ENCODE measurements at regions of chr7 and their contacts with region 1.

Region 1: DNA sequence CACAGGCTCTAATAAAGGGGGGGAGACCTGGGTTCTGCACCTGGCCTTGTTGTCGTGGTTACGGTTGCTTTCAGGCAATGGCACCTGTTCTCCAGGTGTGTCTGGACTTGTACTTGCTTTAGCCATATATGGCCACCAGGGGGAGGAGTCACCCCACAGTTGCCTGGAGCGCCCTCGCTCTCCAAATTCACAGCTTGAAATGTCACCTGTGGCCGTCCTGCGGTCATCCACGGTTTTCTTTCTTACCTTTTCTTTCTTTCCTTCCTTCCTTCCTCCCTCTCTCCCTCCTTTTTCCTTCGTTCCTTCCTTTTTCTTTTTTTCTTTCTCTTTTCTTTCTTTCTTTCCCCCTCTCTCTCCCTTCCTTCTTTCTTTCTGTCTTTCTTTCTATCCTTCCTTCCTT is 157.2 kb upstream of the ZNF92 start:
- DNase-seq: peak; percentile 36
- H3K4me3 ChIP-seq: no peak overlapping the region
- H3K27ac ChIP-seq: no peak overlapping the region
- H3K4me1 ChIP-seq: peaks cover 6% of the 10 kb centered on the region
- H3K27me3 ChIP-seq: no peaks in the 10 kb centered on the region
- CTCF ChIP-seq: peak; percentile 51 to 75
- POLR2A ChIP-seq: no peak

Region 2: GRCh38 chr7:64241162-64241561 is 975.3 kb before region 1 on chr7:
- CTCF ChIA-PET with region 1: no interaction called
- POLR2A ChIA-PET with region 1: no interaction called
- dilution Hi-C with region 1: no loop called
- intact Hi-C with region 1: no loop called
- DNase-seq: no peak
- H3K4me3 ChIP-seq: no peak overlapping the region
- H3K27ac ChIP-seq: no peak overlapping the region
- H3K4me1 ChIP-seq: no peaks in the 10 kb centered on the region
- H3K27me3 ChIP-seq: no peaks in the 10 kb centered on the region
- CTCF ChIP-seq: no peak
- POLR2A ChIP-seq: no peak

Region 3: DNA sequence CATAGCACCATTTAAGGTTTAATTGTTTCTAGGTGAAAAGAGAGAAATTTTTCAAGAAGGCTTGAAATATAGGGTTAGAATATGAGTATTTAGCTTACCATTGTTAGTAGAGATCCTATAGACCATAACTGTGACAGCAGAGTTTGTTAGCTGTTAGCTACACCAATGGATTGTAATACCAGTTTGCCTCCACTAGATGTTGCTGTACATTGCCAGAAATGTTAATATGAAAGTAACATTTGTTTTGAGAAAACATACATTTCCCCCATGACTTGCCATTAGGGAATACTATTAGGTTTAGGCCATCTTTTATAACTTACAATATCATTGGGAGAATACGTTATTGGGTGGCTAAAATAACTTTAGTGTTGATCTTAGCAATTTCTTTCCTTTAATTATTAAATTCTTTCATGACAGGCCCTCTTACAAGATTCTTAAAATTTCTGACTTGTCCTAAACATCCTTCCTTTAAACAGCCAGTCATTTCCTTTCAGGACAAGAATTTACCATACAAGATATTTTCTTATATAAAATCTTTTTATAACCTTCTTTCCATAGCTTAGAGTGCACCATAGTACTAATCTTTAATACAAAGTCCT is 265.1 kb before region 1 on chr7:
- CTCF ChIA-PET with region 1: interaction called, 15 read pairs
- POLR2A ChIA-PET with region 1: no interaction called
- dilution Hi-C with region 1: no loop called
- intact Hi-C with region 1: loop called (anchors 2 kb)
- DNase-seq: peak; percentile 55
- H3K4me3 ChIP-seq: no peak overlapping the region
- H3K27ac ChIP-seq: no peak overlapping the region
- H3K4me1 ChIP-seq: no peaks in the 10 kb centered on the region
- H3K27me3 ChIP-seq: peaks cover 16 to 24% of the 10 kb centered on the region in 2 experiments
- CTCF ChIP-seq: peak; percentile 48 to 58
- POLR2A ChIP-seq: no peak

Region 4: GRCh38 chr7:65307651-65308299 is 91.3 kb after region 1 on chr7:
- CTCF ChIA-PET with region 1: interaction called, 43 read pairs
- POLR2A ChIA-PET with region 1: no interaction called
- dilution Hi-C with region 1: no loop called
- intact Hi-C with region 1: loop called (anchors 1 kb)
- DNase-seq: peak; percentile 68
- H3K4me3 ChIP-seq: no peak overlapping the region
- H3K27ac ChIP-seq: no peak overlapping the region
- H3K4me1 ChIP-seq: no peaks in the 10 kb centered on the region
- H3K27me3 ChIP-seq: peaks cover 0 to 1% of the 10 kb centered on the region in 2 experiments
- CTCF ChIP-seq: peak; percentile 65 to 79
- POLR2A ChIP-seq: no peak

Region 5: GRCh38 chr7:65342723-65343629 is 126.5 kb after region 1 on chr7:
- CTCF ChIA-PET with region 1: no interaction called
- POLR2A ChIA-PET with region 1: no interaction called
- dilution Hi-C with region 1: no loop called
- intact Hi-C with region 1: no loop called
- DNase-seq: no peak
- H3K4me3 ChIP-seq: no peak overlapping the region
- H3K27ac ChIP-seq: no peak overlapping the region
- H3K4me1 ChIP-seq: no peaks in the 10 kb centered on the region
- H3K27me3 ChIP-seq: no peaks in the 10 kb centered on the region
- CTCF ChIP-seq: no peak
- POLR2A ChIP-seq: no peak

Region 6: GRCh38 chr7:65448816-65449504 is 232.5 kb after region 1 on chr7:
- CTCF ChIA-PET with region 1: interaction called, 3 read pairs
- POLR2A ChIA-PET with region 1: no interaction called
- dilution Hi-C with region 1: no loop called
- intact Hi-C with region 1: loop called (anchors 10 kb)
- DNase-seq: peak; percentile 31
- H3K4me3 ChIP-seq: no peak overlapping the region
- H3K27ac ChIP-seq: no peak overlapping the region
- H3K4me1 ChIP-seq: peaks cover 8% of the 10 kb centered on the region
- H3K27me3 ChIP-seq: no peaks in the 10 kb centered on the region
- CTCF ChIP-seq: no peak
- POLR2A ChIP-seq: no peak

Region 7: GRCh38 chr7:65722345-65722792 is 505.9 kb after region 1 on chr7:
- CTCF ChIA-PET with region 1: interaction called, 21 read pairs
- POLR2A ChIA-PET with region 1: no interaction called
- dilution Hi-C with region 1: no loop called
- intact Hi-C with region 1: no loop called
- DNase-seq: peak; percentile 28
- H3K4me3 ChIP-seq: no peak overlapping the region
- H3K27ac ChIP-seq: no peak overlapping the region
- H3K4me1 ChIP-seq: peaks cover 6% of the 10 kb centered on the region
- H3K27me3 ChIP-seq: no peaks in the 10 kb centered on the region
- CTCF ChIP-seq: peak; percentile 60 to 75
- POLR2A ChIP-seq: no peak

Measured in endothelial cell of umbilical vein (primary cell).